ENCODE measurements at regions of chr17 and their contacts with region 1.

Region 1: GRCh38 chr17:59786536-59787319 is 79.3 kb downstream of the VMP1 start:
- DNase-seq: peak; percentile 85
- H3K4me3 Mint-ChIP-seq: peak overlapping the region; percentile 64
- H3K27ac Mint-ChIP-seq: peak overlapping the region; percentile 99
- H3K4me1 Mint-ChIP-seq: peaks cover 58% of the 10 kb centered on the region
- H3K27me3 Mint-ChIP-seq: no peaks in the 10 kb centered on the region

Region 2: GRCh38 chr17:58337600-58338453 is 1448.9 kb before region 1 on chr17:
- intact Hi-C with region 1: loop called (anchors 10 kb)
- DNase-seq: peak; percentile 93
- H3K4me3 Mint-ChIP-seq: peak overlapping the region; percentile 99
- H3K27ac Mint-ChIP-seq: peak overlapping the region; percentile 99
- H3K4me1 Mint-ChIP-seq: peaks cover 35% of the 10 kb centered on the region
- H3K27me3 Mint-ChIP-seq: no peaks in the 10 kb centered on the region

Region 3: GRCh38 chr17:59707114-59707970 is 79.4 kb before region 1 on chr17 and contains the starts of genes PTRH2 and VMP1:
- intact Hi-C with region 1: loop called (anchors 5 kb)
- DNase-seq: peak; percentile 93
- H3K4me3 Mint-ChIP-seq: peak within 1 kb of the TSS; percentile 95
- H3K27ac Mint-ChIP-seq: peak within 1 kb of the TSS; percentile 85
- H3K4me1 Mint-ChIP-seq: peaks cover 43% of the 10 kb centered on the region
- H3K27me3 Mint-ChIP-seq: no peaks in the 10 kb centered on the region
- total RNA-seq, gene PTRH2: 48.3 and 50.3 TPM in 2 replicates
- total RNA-seq, gene VMP1: 479 and 499 TPM in 2 replicates

Region 4: DNA sequence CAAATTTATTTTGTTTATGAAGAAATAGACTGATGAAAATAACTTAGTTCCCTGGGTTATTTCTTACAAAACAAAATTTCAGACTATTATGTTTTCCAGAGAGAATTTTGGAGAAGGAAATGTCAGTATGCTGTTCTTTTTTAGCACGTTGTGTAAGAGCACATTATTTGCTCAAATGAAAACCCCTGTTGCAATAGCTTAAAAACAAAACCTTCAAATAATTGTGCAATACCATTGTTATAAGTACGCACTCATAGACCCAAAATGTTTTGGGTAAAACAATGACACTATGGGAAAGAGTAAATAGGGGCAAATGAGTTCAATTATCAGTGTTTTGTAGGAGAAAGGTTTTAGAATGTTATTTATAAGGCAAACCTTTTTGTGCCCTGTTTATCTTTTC is 61.0 kb before region 1 on chr17:
- intact Hi-C with region 1: no loop called
- DNase-seq: no peak
- H3K4me3 Mint-ChIP-seq: no peak overlapping the region
- H3K27ac Mint-ChIP-seq: no peak overlapping the region
- H3K4me1 Mint-ChIP-seq: peaks cover 2% of the 10 kb centered on the region
- H3K27me3 Mint-ChIP-seq: no peaks in the 10 kb centered on the region

Region 5: DNA sequence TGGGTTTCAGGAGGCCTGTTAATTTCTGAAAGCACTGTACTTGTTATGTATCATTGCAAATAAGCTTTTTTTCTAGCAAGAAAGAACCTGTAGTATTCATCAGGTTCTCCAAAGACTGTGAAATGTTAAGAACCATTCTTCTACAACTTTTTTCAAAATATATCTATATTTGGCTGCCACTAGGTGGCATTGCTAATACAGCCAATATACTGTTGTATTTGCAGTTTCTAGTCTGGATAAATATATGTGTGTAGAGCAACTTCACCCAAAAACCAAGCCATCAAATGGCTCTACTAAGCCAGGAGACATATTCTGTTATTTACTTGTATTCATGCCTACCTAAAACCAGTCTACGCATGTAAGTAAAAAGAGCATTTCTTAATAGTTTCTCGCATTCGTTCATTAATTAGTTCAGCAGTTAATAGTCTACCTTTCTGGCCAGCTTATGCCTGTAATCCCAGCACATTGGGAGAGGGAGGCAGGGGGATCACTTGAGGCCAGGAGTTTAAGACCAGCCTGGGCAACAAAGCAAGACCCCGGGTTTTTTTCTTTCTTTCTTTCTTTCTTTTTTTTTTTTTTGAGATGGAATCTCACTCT is 39.8 kb before region 1 on chr17:
- intact Hi-C with region 1: no loop called
- DNase-seq: no peak
- H3K4me3 Mint-ChIP-seq: no peak overlapping the region
- H3K27ac Mint-ChIP-seq: no peak overlapping the region
- H3K4me1 Mint-ChIP-seq: peaks cover 13% of the 10 kb centered on the region
- H3K27me3 Mint-ChIP-seq: no peaks in the 10 kb centered on the region

Region 6: GRCh38 chr17:59762513-59763374 is 24.0 kb before region 1 on chr17:
- intact Hi-C with region 1: loop called (anchors 1 kb)
- DNase-seq: no peak
- H3K4me3 Mint-ChIP-seq: peak overlapping the region; percentile 59
- H3K27ac Mint-ChIP-seq: peak overlapping the region; percentile 95
- H3K4me1 Mint-ChIP-seq: peaks cover 47% of the 10 kb centered on the region
- H3K27me3 Mint-ChIP-seq: no peaks in the 10 kb centered on the region

Region 7: DNA sequence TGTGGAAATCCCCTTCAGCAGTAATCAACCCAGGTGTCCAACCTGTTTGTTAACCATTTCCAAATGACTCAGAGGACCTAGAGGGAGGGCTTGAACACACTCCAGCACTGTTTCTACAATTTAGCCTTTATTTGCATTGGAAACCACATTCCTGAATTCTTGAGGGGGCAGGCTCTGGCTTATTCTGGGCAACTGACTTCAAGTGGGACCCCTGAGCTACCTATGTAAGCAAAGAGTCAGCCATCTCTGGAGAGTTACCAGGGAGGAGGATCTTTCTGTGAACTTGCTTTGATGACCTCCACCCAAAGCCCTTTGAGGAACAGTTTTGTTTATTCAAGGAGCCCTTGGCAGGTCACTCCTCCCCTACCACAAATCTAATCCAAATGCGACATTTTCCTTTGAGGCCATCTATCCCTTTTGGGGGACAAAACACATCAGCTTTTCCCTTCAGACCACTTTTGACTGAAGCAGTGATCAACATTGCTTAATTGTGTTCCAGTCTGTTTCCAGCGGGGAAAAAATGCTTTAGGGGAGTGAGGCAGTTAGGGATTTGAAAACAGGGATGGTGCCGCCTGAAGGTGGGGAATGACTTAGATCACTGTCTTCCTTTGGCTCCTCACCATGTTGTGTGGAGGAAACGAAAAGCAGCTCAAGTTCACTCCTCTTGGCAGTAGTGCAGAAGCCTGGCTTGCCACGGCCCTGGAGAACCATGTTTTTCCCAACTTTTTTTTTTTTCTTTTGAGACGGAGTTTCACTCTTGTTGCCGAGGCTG is 59.9 kb after region 1 on chr17:
- intact Hi-C with region 1: loop called (anchors 1 kb)
- DNase-seq: no peak
- H3K4me3 Mint-ChIP-seq: peak overlapping the region; percentile 35
- H3K27ac Mint-ChIP-seq: peak overlapping the region; percentile 69
- H3K4me1 Mint-ChIP-seq: peaks cover 48% of the 10 kb centered on the region
- H3K27me3 Mint-ChIP-seq: no peaks in the 10 kb centered on the region

Measured in activated T-helper 2 cell treated with anti-CD3 and anti-CD28 coated beads, Interferon-gamma antibody, Interleukin-2, Interleukin-4, amounts not matched to agents 10 μg/mL and 5 μg/mL and 100 μg/mL, durations not matched to agents 14 hours and 24 hours and 36 hours (primary cell).